ENCODE measurements at regions of chr3 and their contacts with region 1.

Region 1: DNA sequence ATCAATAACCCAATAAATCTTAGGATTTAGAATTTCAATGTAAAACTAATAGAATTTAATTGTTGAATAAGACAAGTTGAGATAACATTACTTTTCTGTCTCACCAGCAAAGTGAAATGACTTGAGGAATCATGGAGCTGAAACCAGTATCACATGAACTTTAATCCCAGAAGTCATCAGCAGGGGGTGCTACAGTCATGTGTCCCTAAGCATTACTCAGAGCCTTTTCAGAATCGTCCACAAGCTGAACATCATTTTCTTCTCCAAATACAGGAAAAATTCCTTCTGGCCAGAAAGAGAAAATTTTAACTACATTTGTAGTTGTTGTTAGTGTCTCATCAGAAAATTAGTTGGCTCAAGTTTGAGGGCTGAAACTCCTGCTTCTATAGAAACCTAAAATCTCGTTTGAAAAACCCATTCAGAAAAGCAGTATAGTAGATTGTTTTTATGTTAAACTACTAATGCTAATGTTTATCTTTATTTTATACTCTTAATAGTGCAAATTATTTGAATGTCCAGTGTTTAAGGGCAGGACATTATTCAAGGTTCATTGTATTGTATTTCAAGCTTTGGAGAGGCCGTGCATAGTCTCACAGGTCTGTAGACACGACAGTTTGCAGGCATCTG is 384.1 kb downstream of the PLOD2 start:
- DNase-seq: peak in 1 of 10 donors; percentile 14
- H3K4me3 ChIP-seq: no peak overlapping the region
- H3K27ac ChIP-seq: no peak overlapping the region
- H3K27me3 ChIP-seq: no peaks in the 10 kb centered on the region
- CTCF ChIP-seq: peak; percentile 30 to 79 (median 62)

Region 2: DNA sequence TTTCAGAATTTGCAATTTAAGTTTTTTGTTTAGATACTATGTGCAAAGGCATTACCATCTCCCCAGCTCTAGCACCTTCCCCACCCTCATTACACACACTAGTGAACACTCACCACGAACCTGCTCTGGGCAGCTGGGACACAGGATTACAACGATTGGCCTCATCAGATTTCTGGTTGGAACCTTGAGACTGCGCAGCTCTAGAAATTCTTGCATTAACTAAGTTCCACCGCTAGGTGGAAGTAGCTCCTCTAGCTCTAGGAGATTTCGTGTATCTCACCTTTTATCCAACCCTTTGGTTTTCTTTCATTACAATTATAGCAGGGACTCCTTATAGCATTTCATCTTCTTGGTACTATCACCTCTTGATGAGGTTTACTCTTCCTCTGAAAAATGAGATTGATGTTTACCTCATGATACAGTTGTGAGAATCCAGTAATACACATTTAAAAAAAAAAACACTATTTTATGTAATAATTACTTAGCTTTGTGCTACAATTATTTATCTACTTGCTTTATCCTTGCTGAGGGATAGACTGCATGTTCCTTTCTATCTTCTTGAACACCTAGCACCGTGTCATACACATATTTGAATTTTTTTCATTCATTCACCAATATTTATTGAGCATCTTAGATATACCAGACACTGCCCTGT is 412.8 kb after region 1 on chr3:
- intact Hi-C with region 1: loop called in 1 of 2 experiments (anchors 5 kb)
- DNase-seq: peak in 2 of 10 donors; percentile 8 to 32
- H3K4me3 ChIP-seq: peak overlapping the region in 1 of 59 donors; percentile 5
- H3K27ac ChIP-seq: no peak overlapping the region
- H3K27me3 ChIP-seq: no peaks in the 10 kb centered on the region
- CTCF ChIP-seq: peak; percentile 66 to 89 (median 80)